ENCODE measurements at regions of chr6 and their contacts with region 1.

Region 1: GRCh38 chr6:43817192-43817591 is 47.2 kb downstream of the VEGFA start:
- DNase-seq: peak; percentile 76 to 84 (median 84)
- H3K4me3 ChIP-seq: no peak overlapping the region
- H3K27ac ChIP-seq: no peak overlapping the region
- H3K4me1 ChIP-seq: peaks cover 3 to 42% (median 27%) of the 10 kb centered on the region in 4 experiments
- H3K27me3 ChIP-seq: no peaks in the 10 kb centered on the region

Region 2: DNA sequence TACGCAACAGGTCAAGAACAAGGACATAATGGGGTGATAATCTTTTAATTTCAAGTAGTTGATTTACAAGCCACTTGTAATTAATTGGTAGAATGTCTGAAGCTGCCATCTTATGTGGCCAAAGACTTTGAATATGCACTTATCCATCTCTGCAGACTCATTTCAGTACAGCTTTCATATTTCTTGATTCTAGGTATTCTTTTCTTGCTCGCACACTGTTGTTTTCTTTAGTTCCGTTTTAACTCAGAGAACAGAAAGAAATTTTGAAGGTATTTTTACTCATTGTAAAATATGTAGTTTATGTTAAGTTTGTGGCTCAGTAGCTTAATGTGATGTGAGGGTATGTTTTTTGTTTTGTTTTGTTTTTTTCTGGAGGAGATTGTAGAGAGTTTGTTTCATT is 1179.5 kb before region 1 on chr6:
- CTCF ChIA-PET with region 1: no interaction called
- POLR2A ChIA-PET with region 1: no interaction called
- DNase-seq: no peak
- H3K4me3 ChIP-seq: no peak overlapping the region
- H3K27ac ChIP-seq: no peak overlapping the region
- H3K4me1 ChIP-seq: peaks cover 0 to 3% (median 0%) of the 10 kb centered on the region in 4 experiments
- H3K27me3 ChIP-seq: no peaks in the 10 kb centered on the region

Region 3: DNA sequence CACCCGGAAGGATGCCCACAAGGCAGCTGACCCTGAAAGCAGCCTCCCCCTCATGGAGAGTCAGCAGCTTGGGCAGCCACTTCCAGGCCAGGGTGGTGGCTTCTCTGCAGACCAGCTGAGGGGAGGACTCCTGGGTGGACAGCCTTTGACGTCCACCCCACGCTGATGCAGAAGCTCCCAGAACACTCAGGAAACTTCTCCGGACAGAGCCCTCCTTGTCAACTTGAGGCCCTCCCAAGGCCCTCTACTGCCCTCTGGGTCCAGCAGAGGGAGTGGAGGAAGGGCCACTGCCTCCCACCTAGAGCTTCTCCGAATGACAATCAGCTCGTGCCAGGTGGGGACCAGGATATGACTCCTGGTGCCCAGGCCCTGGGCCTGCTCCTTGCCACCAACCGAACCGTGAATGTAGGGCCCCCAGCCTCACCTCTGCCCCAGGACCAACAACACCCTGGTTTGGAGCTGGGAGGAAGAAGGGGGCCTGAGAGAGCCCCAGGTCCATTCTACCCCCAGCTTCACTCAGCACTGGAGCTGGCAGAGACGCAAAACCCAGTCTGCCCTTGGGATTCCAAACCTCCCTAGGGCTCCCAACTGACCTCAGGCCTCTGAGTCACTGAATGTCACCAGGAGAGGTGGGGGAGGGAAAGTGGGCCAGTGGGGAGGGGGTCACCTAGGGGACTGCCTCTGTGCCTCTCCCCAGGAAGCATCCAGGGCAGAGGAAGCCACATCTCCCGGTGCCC is 530.0 kb before region 1 on chr6:
- CTCF ChIA-PET with region 1: no interaction called
- POLR2A ChIA-PET with region 1: no interaction called
- DNase-seq: no peak
- H3K4me3 ChIP-seq: no peak overlapping the region
- H3K27ac ChIP-seq: no peak overlapping the region
- H3K4me1 ChIP-seq: peaks cover 0 to 7% (median 4%) of the 10 kb centered on the region in 4 experiments
- H3K27me3 ChIP-seq: peaks cover 0 to 56% (median 9%) of the 10 kb centered on the region in 5 experiments

Region 4: DNA sequence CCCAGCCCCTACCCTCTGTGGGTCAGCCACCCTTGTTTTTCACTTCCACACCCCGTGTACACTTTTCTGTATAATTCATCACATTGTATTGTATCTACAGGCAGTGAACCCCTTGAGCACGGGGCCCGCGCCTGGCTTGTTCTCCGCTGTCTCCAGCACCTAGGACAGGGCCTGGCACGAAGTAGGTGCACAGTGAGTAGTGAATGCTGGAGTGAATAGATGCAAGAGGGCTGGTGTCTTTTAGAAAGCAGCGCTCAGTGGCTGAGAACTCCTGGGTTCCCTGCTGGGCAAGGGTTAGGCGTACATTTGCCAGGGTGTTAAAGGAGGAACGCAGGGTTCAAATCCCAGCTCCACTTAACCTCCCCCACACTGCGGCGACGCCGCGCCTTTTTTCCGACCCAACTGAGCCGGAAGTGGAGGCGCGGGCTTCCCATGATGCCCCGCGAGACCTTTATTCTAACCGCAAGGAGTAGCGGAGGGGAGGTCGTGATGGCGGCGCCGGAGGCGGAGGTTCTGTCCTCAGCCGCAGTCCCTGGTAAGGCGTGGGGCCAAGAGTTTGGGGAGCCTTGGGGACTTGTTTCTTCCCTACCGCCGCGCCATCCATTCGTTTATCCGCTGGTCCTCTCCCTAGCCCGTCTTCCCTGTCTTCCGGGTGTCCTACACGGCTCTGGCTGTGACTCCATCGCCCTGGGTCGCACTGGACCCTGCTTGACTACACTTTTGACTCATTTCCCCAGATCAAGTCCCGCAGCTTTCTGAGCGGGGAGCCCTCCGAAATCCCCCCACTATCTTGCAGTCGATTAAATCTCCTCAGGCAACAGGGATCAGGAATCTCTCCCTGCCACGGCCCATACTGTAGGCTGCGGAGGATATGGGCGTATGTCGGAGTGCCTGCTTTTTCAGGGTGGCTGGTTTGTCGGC is 181.5 kb before region 1 on chr6 and contains the start of gene MAD2L1BP:
- CTCF ChIA-PET with region 1: no interaction called
- POLR2A ChIA-PET with region 1: no interaction called
- DNase-seq: peak; percentile 78 to 90 (median 88)
- H3K4me3 ChIP-seq: peak within 1 kb of the TSS; percentile 74 to 99 (median 91)
- H3K27ac ChIP-seq: peak within 1 kb of the TSS; percentile 85 to 92
- H3K4me1 ChIP-seq: peaks cover 9 to 43% (median 35%) of the 10 kb centered on the region in 4 experiments
- H3K27me3 ChIP-seq: no peaks in the 10 kb centered on the region

Region 5: DNA sequence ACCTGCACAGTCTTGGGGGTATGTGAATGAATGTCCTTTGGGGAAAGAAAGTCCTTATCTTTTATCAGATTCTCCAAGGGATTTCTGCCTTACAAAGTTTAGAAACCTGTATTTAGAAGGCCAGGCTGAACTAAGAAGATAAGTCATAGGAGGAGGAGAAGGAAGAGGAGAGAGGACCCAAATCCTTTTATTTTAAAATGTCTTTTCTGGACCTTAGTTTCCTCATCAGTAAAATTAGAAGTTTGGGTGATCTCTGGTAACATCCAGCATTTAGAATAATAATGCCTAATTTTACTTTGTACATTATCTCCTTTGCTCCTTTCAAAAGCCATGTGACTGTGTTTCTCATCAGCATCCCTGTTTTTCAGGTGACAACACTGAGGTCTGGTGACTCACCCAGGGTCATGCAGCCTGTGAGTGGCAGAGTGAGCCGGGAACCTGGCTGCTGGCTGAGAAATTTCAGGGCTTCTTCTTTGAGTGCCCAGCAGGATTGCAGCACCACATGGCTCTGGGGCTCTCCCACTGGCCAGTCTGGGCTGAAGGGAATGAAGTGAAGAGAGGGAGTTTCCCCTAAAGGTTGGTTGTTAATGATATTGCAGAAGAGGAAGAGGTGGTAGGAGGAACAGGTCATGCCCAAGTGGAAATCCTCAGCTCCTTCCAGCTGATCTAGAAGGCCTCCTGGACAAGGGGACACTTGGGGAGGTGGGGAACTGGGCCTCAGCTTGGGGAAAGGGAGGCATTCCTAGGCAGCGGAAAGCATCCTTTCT is 13.2 kb before region 1 on chr6:
- CTCF ChIA-PET with region 1: interaction called, 33 read pairs
- POLR2A ChIA-PET with region 1: no interaction called
- DNase-seq: peak in 2 of 3 donors; percentile 46
- H3K4me3 ChIP-seq: no peak overlapping the region
- H3K27ac ChIP-seq: peak overlapping the region in 1 of 2 experiments; percentile 18
- H3K4me1 ChIP-seq: peaks cover 14 to 79% (median 55%) of the 10 kb centered on the region in 4 experiments
- H3K27me3 ChIP-seq: no peaks in the 10 kb centered on the region

Region 6: GRCh38 chr6:43828711-43829110 is 11.5 kb after region 1 on chr6:
- CTCF ChIA-PET with region 1: interaction called, 12 read pairs
- POLR2A ChIA-PET with region 1: no interaction called
- DNase-seq: peak in 2 of 3 donors; percentile 40 to 50
- H3K4me3 ChIP-seq: no peak overlapping the region
- H3K27ac ChIP-seq: no peak overlapping the region
- H3K4me1 ChIP-seq: peaks cover 0 to 11% (median 4%) of the 10 kb centered on the region in 4 experiments
- H3K27me3 ChIP-seq: no peaks in the 10 kb centered on the region

Region 7: GRCh38 chr6:43923376-43924221 is 106.4 kb after region 1 on chr6:
- CTCF ChIA-PET with region 1: no interaction called
- POLR2A ChIA-PET with region 1: no interaction called
- DNase-seq: peak in 2 of 3 donors; percentile 20 to 31
- H3K4me3 ChIP-seq: peak overlapping the region in 4 of 7 experiments; percentile 19 to 47 (median 41)
- H3K27ac ChIP-seq: no peak overlapping the region
- H3K4me1 ChIP-seq: peaks cover 0 to 37% (median 29%) of the 10 kb centered on the region in 4 experiments
- H3K27me3 ChIP-seq: no peaks in the 10 kb centered on the region

Region 8: DNA sequence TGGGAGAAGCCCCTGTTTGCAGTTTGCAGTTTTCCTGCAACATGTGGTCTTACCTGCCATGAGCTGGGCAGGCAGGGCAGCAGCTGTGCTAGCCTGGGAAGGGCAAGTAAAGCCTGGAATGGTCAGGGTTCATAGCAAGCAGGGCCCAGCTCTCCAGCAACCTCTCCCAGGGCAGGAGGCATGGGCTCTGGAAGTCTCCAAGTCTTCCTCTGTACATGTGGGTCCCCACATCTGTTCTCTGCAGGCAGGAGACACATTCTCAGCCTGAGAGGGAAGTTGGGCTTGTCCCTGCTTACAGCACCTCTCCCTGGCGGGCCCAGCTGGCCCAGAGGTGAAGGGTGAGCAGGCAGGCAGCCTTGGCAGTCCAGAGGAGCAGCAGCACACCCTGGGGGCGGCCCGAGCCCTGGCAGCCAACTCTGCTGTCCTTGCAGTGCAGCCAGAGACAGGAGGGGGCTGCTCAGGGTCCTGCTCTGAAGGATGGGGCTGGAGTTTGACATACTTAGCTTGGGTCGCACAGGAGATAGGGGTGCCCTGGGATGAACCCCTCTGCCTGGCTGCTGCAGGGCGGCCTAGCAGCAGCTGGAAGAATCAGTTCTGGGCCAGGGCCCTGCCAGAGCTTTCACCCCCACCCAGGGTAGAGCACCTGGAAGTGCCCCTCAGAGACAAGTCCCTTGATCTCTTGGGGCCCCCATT is 134.0 kb after region 1 on chr6:
- CTCF ChIA-PET with region 1: interaction called, 22 read pairs
- POLR2A ChIA-PET with region 1: no interaction called
- DNase-seq: peak; percentile 63 to 77 (median 75)
- H3K4me3 ChIP-seq: no peak overlapping the region
- H3K27ac ChIP-seq: no peak overlapping the region
- H3K4me1 ChIP-seq: peaks cover 0 to 5% (median 0%) of the 10 kb centered on the region in 4 experiments
- H3K27me3 ChIP-seq: peaks cover 0 to 2% (median 0%) of the 10 kb centered on the region in 5 experiments

Measured in common myeloid progenitor, CD34-positive (primary cell).